Activated CD4-positive, alpha-beta T cell treated with anti-CD3 and anti-CD28 coated beads, Interleukin-2, amount 10 ng/mL, durations not matched to agents 24 days and 14 days (primary cell): ENCODE measurements at regions of chr4 and their contacts with region 1.

Region 1: GRCh38 chr4:151760712-151761527 is at the start of gene GATB:
- DNase-seq: peak; percentile 97
- H3K4me3 Mint-ChIP-seq: peak within 1 kb of the TSS; percentile 93
- H3K27ac Mint-ChIP-seq: peak within 1 kb of the TSS; percentile 95
- H3K4me1 Mint-ChIP-seq: peaks cover 15% of the 10 kb centered on the region
- H3K27me3 Mint-ChIP-seq: peaks cover 7% of the 10 kb centered on the region
- total RNA-seq, gene GATB: 15.7 and 20.2 TPM in 2 replicates

Region 2: DNA sequence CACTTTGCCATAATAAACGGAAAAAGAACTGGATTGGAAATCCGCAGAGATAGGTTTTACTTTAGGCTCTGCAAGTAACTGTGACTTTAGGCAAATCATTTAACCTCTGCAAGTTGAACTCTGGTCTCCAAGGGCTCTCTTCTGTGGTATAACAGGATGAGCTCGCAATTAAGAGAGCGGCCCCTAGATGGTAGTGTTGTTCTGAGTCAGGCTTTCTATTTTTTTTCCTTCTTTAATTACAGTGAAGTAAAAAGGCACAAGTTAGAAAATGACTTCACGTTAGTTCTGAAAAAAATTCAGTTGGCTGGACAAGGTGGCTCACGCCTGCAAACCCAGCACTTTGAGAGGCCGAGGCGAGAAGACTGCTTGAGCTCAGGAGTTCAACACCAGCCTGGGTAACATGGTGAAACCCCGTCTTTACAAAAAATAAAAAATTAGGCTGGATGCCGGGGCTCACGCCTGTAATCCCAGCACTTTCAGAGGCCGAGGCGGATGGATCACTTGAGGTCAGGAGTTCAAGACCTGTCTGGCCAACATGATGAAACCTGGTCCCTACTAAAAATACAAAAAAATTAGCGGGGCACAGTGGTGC is 643.5 kb before region 1 on chr4:
- intact Hi-C with region 1: loop called (anchors 5 kb)
- DNase-seq: peak; percentile 87
- H3K4me3 Mint-ChIP-seq: no peak overlapping the region
- H3K27ac Mint-ChIP-seq: no peak overlapping the region
- H3K4me1 Mint-ChIP-seq: peaks cover 5% of the 10 kb centered on the region
- H3K27me3 Mint-ChIP-seq: no peaks in the 10 kb centered on the region

Region 3: DNA sequence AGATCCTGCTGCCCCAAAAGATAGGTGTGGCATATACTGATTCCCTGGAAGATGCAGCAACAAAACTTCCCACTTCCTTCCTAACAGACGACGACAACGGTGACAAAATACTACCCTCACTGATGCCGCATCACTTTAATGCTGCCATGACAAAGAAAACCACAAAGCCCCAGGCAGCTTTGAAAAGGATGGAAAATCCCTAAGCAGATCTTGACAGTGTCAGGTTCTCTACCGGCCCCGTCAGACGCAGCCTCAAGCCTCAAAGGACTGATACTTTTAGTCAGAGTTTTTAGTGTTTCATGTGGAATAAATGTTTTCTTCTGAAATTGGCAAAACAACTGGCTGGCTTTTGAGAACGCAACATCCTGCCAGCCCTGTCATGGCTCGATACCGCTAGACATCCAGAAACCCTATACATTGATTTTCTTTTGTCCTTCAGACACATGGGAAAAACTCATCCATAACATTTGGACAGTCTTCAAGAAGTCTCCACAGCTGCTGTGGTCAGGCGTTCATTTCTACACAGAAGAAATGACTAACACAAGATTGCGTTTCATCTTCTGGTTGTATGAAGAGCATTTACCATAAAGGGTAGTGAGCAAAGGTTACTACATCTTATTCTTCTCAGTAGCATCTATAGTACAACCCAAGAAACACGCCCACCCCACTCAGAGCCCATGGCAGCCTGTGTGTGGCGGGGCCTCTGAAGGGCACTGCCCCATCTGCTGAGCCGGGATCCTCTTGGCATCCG is 60.2 kb before region 1 on chr4:
- intact Hi-C with region 1: loop called (anchors 1 kb)
- DNase-seq: peak; percentile 73
- H3K4me3 Mint-ChIP-seq: peak overlapping the region; percentile 59
- H3K27ac Mint-ChIP-seq: peak overlapping the region; percentile 74
- H3K4me1 Mint-ChIP-seq: peaks cover 10% of the 10 kb centered on the region
- H3K27me3 Mint-ChIP-seq: no peaks in the 10 kb centered on the region

Region 4: DNA sequence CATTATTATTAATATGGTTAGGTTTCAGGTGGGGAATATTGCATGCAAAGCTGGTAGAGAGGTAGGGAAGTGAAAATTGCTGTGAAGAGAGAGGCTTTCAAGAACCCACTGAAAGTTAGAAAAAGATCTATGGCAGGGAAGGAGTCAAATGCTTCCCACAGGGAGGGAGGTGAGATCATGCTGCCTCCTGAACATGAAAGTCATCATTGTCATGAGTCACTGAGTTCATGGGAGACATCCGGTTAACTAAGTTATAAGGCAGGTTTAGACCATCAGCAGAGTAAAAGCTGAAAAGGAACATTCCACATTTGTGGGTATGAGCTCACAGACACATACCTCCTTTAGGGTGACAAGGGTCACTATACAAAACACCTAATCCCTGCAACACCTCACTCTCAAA is 16.3 kb before region 1 on chr4:
- intact Hi-C with region 1: no loop called
- DNase-seq: no peak
- H3K4me3 Mint-ChIP-seq: no peak overlapping the region
- H3K27ac Mint-ChIP-seq: no peak overlapping the region
- H3K4me1 Mint-ChIP-seq: peaks cover 5% of the 10 kb centered on the region
- H3K27me3 Mint-ChIP-seq: no peaks in the 10 kb centered on the region

Region 5: DNA sequence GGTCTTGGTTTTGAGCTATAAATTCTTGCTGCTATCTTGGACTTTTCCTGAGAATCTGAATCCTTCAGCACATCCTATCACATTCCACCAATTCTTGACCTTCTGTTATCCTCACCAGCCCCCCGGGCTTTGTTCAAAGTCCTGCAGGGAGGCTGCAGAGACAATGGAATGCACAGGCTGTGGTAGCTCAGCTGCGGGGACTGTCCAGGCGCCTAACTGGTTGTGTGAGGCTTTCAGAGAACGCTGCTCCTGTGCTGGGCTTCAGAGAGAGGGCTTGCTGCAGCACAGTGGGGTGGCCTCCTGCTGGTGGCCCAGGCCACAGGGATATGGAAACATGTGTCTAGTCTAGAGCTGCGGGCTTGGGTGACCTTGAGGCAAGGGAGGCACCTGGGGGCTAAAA is 196.2 kb after region 1 on chr4:
- intact Hi-C with region 1: no loop called
- DNase-seq: no peak
- H3K4me3 Mint-ChIP-seq: no peak overlapping the region
- H3K27ac Mint-ChIP-seq: no peak overlapping the region
- H3K4me1 Mint-ChIP-seq: no peaks in the 10 kb centered on the region
- H3K27me3 Mint-ChIP-seq: no peaks in the 10 kb centered on the region

Region 6: DNA sequence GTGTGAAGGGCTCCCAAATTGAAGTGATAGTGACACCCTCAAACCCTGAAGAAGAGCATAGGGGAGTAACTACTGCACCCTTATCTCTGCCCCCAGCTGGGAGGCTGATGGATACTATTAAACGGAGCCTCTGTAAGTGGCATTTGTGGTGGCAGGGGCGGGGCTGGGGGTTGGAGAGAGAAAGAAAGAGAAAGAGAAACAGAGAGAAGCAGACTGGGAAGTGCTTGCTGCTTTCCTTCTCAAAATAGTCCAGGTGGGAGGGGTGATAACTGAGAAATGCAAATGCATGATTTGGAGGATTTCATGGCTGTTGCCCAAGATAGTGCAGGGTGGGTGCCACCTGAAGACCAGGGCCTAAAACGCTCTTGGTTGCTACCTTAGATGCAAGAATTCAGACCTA is 253.4 kb after region 1 on chr4:
- intact Hi-C with region 1: loop called (anchors 10 kb)
- DNase-seq: peak; percentile 90
- H3K4me3 Mint-ChIP-seq: peak overlapping the region; percentile 55
- H3K27ac Mint-ChIP-seq: peak overlapping the region; percentile 57
- H3K4me1 Mint-ChIP-seq: peaks cover 51% of the 10 kb centered on the region
- H3K27me3 Mint-ChIP-seq: peaks cover 4% of the 10 kb centered on the region

Region 7: GRCh38 chr4:152369902-152370295 is 609.0 kb after region 1 on chr4:
- intact Hi-C with region 1: loop called (anchors 10 kb)
- DNase-seq: no peak
- H3K4me3 Mint-ChIP-seq: no peak overlapping the region
- H3K27ac Mint-ChIP-seq: no peak overlapping the region
- H3K4me1 Mint-ChIP-seq: peaks cover 9% of the 10 kb centered on the region
- H3K27me3 Mint-ChIP-seq: no peaks in the 10 kb centered on the region

Region 8: GRCh38 chr4:152779513-152780266 is 1018.8 kb after region 1 on chr4 and contains the starts of genes ARFIP1 and TIGD4:
- intact Hi-C with region 1: loop called (anchors 1 kb)
- DNase-seq: peak; percentile 99
- H3K4me3 Mint-ChIP-seq: peak within 1 kb of the TSS; percentile 100
- H3K27ac Mint-ChIP-seq: peak within 1 kb of the TSS; percentile 97
- H3K4me1 Mint-ChIP-seq: peaks cover 44% of the 10 kb centered on the region
- H3K27me3 Mint-ChIP-seq: peaks cover 30% of the 10 kb centered on the region
- total RNA-seq, gene ARFIP1: 13.0 and 14.6 TPM in 2 replicates
- total RNA-seq, gene TIGD4: 0.28 and 0.31 TPM in 2 replicates